ENCODE measurements at regions of chr7 and their contacts with region 1.

Region 1: DNA sequence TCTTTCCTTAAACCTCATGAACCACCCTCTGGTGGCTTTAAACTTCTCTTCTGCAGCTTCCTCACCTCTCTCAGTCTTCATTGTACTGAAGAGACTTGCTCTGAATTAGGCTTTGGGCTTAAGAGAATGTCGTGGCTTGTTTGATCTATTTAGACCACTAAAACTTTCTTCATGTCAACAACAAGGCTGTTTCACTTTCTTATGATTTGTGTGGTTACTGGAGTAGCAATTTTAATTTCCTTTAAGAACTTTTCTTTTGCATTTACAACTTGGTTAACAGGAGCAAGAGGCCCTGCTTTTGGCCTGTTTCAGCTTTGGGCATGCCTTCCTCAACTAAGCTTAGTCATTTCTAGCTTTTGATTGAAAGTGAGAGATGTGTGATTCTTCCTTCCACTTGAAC is 38.1 kb upstream of the CDHR3 start:
- DNase-seq: peak in 6 of 14 experiments; percentile 2 to 66 (median 38)
- ATAC-seq: peak; percentile 87
- H3K4me3 ChIP-seq: no peak overlapping the region
- H3K4me3 Mint-ChIP-seq: peak overlapping the region; percentile 22
- H3K27ac ChIP-seq: no peak overlapping the region
- H3K27ac Mint-ChIP-seq: peak overlapping the region; percentile 87
- H3K4me1 ChIP-seq: peaks cover 16% of the 10 kb centered on the region
- H3K4me1 Mint-ChIP-seq: peaks cover 41% of the 10 kb centered on the region
- H3K27me3 ChIP-seq: no peaks in the 10 kb centered on the region
- H3K27me3 Mint-ChIP-seq: no peaks in the 10 kb centered on the region
- CTCF ChIP-seq: no peak

Region 2: GRCh38 chr7:105699568-105700236 is 225.2 kb before region 1 on chr7:
- CTCF ChIA-PET with region 1: no interaction called
- POLR2A ChIA-PET with region 1: no interaction called
- intact Hi-C with region 1: loop called in 1 of 2 experiments (anchors 5 kb)
- DNase-seq: no peak
- ATAC-seq: no peak
- H3K4me3 ChIP-seq: no peak overlapping the region
- H3K4me3 Mint-ChIP-seq: no peak overlapping the region
- H3K27ac ChIP-seq: no peak overlapping the region
- H3K27ac Mint-ChIP-seq: no peak overlapping the region
- H3K4me1 ChIP-seq: no peaks in the 10 kb centered on the region
- H3K4me1 Mint-ChIP-seq: no peaks in the 10 kb centered on the region
- H3K27me3 ChIP-seq: no peaks in the 10 kb centered on the region
- H3K27me3 Mint-ChIP-seq: no peaks in the 10 kb centered on the region
- CTCF ChIP-seq: no peak

Region 3: GRCh38 chr7:105830391-105831301 is 94.3 kb before region 1 on chr7:
- CTCF ChIA-PET with region 1: no interaction called
- POLR2A ChIA-PET with region 1: no interaction called
- intact Hi-C with region 1: no loop called
- DNase-seq: peak in 1 of 14 experiments; percentile 16
- ATAC-seq: no peak
- H3K4me3 ChIP-seq: no peak overlapping the region
- H3K4me3 Mint-ChIP-seq: no peak overlapping the region
- H3K27ac ChIP-seq: no peak overlapping the region
- H3K27ac Mint-ChIP-seq: no peak overlapping the region
- H3K4me1 ChIP-seq: peaks cover 15% of the 10 kb centered on the region
- H3K4me1 Mint-ChIP-seq: peaks cover 48% of the 10 kb centered on the region
- H3K27me3 ChIP-seq: no peaks in the 10 kb centered on the region
- H3K27me3 Mint-ChIP-seq: no peaks in the 10 kb centered on the region
- CTCF ChIP-seq: no peak

Region 4: DNA sequence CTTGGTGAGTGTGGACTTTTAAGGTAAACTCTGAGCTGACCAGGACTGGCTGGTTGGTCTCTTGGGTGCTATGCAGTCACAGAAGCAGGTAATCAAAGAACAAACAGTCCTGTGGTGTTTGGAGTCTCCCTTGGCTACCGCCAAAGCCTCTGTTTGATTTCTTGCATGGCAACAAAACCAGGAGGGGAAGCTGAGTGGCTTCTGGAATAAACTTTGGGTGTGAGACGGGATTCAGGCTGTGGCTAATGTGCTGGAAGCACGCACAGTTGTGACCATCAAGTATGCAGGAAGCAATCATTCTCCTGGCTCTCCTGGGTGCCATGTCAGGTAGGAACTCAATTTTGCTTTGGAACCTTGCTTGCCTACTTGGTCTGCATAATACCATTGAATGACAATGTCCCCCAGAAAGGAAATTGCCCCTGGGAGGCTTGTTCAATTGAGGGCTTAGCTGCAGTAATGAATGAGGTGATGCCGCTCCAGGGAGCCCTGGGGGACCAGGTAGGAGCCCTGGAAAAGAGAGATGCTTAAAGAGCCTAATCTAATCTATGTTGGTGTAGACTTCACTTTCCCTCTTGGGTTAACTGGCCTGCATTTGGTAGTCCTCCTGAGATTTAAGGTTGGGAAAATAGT is 38.2 kb after region 1 on chr7 and contains the start of gene CDHR3:
- CTCF ChIA-PET with region 1: no interaction called
- POLR2A ChIA-PET with region 1: no interaction called
- intact Hi-C with region 1: no loop called
- DNase-seq: no peak
- ATAC-seq: no peak
- H3K4me3 ChIP-seq: no peak within 1 kb of the TSS
- H3K4me3 Mint-ChIP-seq: no peak within 1 kb of the TSS
- H3K27ac ChIP-seq: no peak within 1 kb of the TSS
- H3K27ac Mint-ChIP-seq: no peak within 1 kb of the TSS
- H3K4me1 ChIP-seq: no peaks in the 10 kb centered on the region
- H3K4me1 Mint-ChIP-seq: no peaks in the 10 kb centered on the region
- H3K27me3 ChIP-seq: no peaks in the 10 kb centered on the region
- H3K27me3 Mint-ChIP-seq: no peaks in the 10 kb centered on the region
- CTCF ChIP-seq: no peak
- total RNA-seq, gene CDHR3: 10.3 to 12.2 TPM

Measured in CD4-positive, alpha-beta T cell (primary cell).